ENCODE measurements at regions of chr9 and their contacts with region 1.

Region 1: GRCh38 chr9:78035383-78035993 is 3.9 kb upstream of the GNAQ start:
- DNase-seq: peak; percentile 7
- ATAC-seq: peak; percentile 51
- H3K4me3 ChIP-seq: no peak overlapping the region
- H3K27ac ChIP-seq: no peak overlapping the region
- H3K4me1 ChIP-seq: no peaks in the 10 kb centered on the region
- H3K27me3 ChIP-seq: peaks cover 4 to 15% of the 10 kb centered on the region in 2 experiments; a peak in 3 of 4 replicates
- CTCF ChIP-seq: peak; percentile 64 to 72 (median 71)
- EP300 ChIP-seq: no peak
- POLR2A ChIP-seq: no peak
- RAD21 ChIP-seq: peak; percentile 84

Region 2: GRCh38 chr9:77456829-77457437 is 578.6 kb before region 1 on chr9:
- CTCF ChIA-PET with region 1: interaction called, 22 read pairs
- POLR2A ChIA-PET with region 1: no interaction called
- RAD21 ChIA-PET with region 1: no interaction called
- SMC1A ChIA-PET with region 1: interaction called, 11 read pairs
- in situ Hi-C with region 1: no loop called
- intact Hi-C with region 1: loop called (anchors 10 kb)
- DNase-seq: no peak
- ATAC-seq: peak; percentile 91
- H3K4me3 ChIP-seq: no peak overlapping the region
- H3K27ac ChIP-seq: no peak overlapping the region
- H3K4me1 ChIP-seq: no peaks in the 10 kb centered on the region
- H3K27me3 ChIP-seq: no peaks in the 10 kb centered on the region; a peak in 2 of 4 replicates
- CTCF ChIP-seq: peak; percentile 79 to 94 (median 90)
- EP300 ChIP-seq: no peak
- POLR2A ChIP-seq: no peak
- RAD21 ChIP-seq: peak; percentile 47

Region 3: GRCh38 chr9:77864211-77864889 is 171.1 kb before region 1 on chr9:
- CTCF ChIA-PET with region 1: interaction called, 40 read pairs
- POLR2A ChIA-PET with region 1: no interaction called
- RAD21 ChIA-PET with region 1: interaction called, 33 read pairs
- SMC1A ChIA-PET with region 1: interaction called, 45 read pairs
- in situ Hi-C with region 1: no loop called
- intact Hi-C with region 1: loop called (anchors 1 kb)
- DNase-seq: no peak
- ATAC-seq: peak; percentile 92
- H3K4me3 ChIP-seq: no peak overlapping the region
- H3K27ac ChIP-seq: no peak overlapping the region
- H3K4me1 ChIP-seq: no peaks in the 10 kb centered on the region
- H3K27me3 ChIP-seq: no peaks in the 10 kb centered on the region
- CTCF ChIP-seq: peak in 2 of 3 experiments; percentile 26 to 42; a peak in 3 of 6 replicates
- EP300 ChIP-seq: no peak
- POLR2A ChIP-seq: no peak
- RAD21 ChIP-seq: peak; percentile 68

Region 4: GRCh38 chr9:77987081-77987656 is 48.3 kb before region 1 on chr9:
- CTCF ChIA-PET with region 1: interaction called, 17 read pairs
- POLR2A ChIA-PET with region 1: no interaction called
- RAD21 ChIA-PET with region 1: interaction called, 3 read pairs
- SMC1A ChIA-PET with region 1: interaction called, 13 read pairs
- in situ Hi-C with region 1: no loop called
- intact Hi-C with region 1: no loop called
- DNase-seq: no peak
- ATAC-seq: no peak
- H3K4me3 ChIP-seq: no peak overlapping the region
- H3K27ac ChIP-seq: no peak overlapping the region
- H3K4me1 ChIP-seq: no peaks in the 10 kb centered on the region
- H3K27me3 ChIP-seq: no peaks in the 10 kb centered on the region; a peak in 1 of 4 replicates
- CTCF ChIP-seq: no peak
- EP300 ChIP-seq: no peak
- POLR2A ChIP-seq: no peak
- RAD21 ChIP-seq: no peak

Region 5: DNA sequence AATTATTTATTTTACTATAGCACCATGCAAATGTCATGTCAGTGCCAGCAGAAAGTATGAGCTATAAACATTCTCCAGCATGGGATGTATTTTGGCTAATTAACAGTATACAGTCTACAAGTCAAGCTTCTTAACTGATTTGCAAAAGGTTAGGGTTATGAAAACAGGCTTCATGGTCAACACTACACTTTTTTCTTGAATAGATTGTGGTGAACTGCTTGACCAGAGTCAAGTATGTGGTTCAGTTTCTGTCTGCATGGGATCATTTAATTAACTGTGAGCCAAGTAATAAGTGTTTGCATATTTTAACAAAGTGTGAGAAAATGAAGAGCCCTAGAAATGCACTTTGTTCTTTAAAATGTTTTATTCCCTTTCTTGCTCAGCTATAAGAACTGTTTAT is 10.6 kb after region 1 on chr9:
- CTCF ChIA-PET with region 1: interaction called, 30 read pairs
- POLR2A ChIA-PET with region 1: no interaction called
- RAD21 ChIA-PET with region 1: interaction called, 3 read pairs
- SMC1A ChIA-PET with region 1: interaction called, 20 read pairs
- in situ Hi-C with region 1: no loop called
- intact Hi-C with region 1: no loop called
- DNase-seq: no peak
- ATAC-seq: peak; percentile 52
- H3K4me3 ChIP-seq: no peak overlapping the region
- H3K27ac ChIP-seq: no peak overlapping the region
- H3K4me1 ChIP-seq: no peaks in the 10 kb centered on the region
- H3K27me3 ChIP-seq: no peaks in the 10 kb centered on the region; a peak in 1 of 4 replicates
- CTCF ChIP-seq: no peak
- EP300 ChIP-seq: no peak
- POLR2A ChIP-seq: no peak
- RAD21 ChIP-seq: no peak

Region 6: GRCh38 chr9:78121488-78121887 is 86.0 kb after region 1 on chr9:
- CTCF ChIA-PET with region 1: interaction called, 59 read pairs
- POLR2A ChIA-PET with region 1: no interaction called
- RAD21 ChIA-PET with region 1: interaction called, 14 read pairs
- SMC1A ChIA-PET with region 1: interaction called, 27 read pairs
- in situ Hi-C with region 1: no loop called
- intact Hi-C with region 1: no loop called
- DNase-seq: no peak
- ATAC-seq: peak; percentile 22; the same call in 1 of the 3 replicates
- H3K4me3 ChIP-seq: no peak overlapping the region
- H3K27ac ChIP-seq: no peak overlapping the region
- H3K4me1 ChIP-seq: peaks cover 7% of the 10 kb centered on the region; the same call in 1 of the 2 replicates
- H3K27me3 ChIP-seq: no peaks in the 10 kb centered on the region
- CTCF ChIP-seq: peak; percentile 49 to 57 (median 53)
- EP300 ChIP-seq: no peak
- POLR2A ChIP-seq: no peak
- RAD21 ChIP-seq: peak; percentile 70

Measured in GM12878 (cell line).